CD4-positive, alpha-beta memory T cell (primary cell): ENCODE measurements at regions of chr5 and their contacts with region 1.

Region 1: DNA sequence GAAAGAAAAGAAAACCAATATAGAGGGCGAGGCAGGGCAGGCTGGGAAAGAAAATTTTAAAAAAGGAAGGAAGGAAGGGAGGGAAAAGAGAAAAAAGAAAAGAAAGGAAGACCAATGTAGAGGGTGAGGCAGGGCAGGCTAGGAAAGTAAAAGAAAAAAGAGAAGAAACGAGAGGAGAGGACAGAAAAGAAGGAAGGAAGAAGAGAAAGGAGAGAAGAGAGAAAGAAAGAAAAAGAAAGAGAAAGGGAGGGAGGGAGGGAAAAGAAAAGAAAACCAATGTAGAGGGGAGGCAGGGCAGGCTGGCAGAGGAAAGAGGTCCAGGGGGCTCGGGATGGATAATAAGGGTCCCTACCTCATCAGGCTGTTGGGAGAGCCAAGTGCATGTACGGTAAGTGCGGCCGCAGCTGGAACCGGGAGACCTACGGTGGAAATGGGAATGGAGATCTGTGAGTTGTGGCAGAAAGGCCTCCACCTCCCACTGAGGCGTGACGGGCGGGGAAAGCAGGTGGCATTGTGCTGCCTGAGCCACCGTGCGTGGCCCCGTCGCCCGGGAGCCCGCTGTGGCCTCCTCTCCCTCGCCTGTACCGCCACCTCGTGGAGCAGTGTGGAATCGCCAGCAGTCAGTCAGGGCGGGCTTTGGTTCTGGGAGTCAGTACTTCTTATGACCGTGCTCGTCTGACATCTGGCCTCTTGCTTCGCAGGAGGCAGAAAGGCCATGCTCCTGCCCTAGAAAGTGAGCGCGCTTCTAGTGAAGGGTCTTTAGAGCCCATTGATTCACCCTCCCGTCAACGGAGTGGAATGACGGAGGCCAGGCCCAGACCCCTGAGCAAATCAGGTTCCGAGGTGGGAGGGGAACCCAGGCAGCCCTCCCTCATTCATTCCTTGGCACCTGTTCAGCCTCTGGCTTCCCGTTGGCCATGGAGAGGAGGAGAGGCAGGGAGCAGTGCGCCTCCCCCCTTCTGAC is 10.4 kb upstream of the NHP2 start:
- DNase-seq: peak; percentile 86 to 91 (median 88)
- H3K4me3 ChIP-seq: no peak overlapping the region
- H3K4me3 Mint-ChIP-seq: peak overlapping the region in 2 of 8 donors; percentile 22 to 65
- H3K27ac ChIP-seq: no peak overlapping the region
- H3K27ac Mint-ChIP-seq: peak overlapping the region in 3 of 7 donors; percentile 13 to 59 (median 53)
- H3K4me1 ChIP-seq: peaks cover 3% of the 10 kb centered on the region
- H3K4me1 Mint-ChIP-seq: peaks cover 1 to 10% (median 6%) of the 10 kb centered on the region in 4 donors
- H3K27me3 ChIP-seq: no peaks in the 10 kb centered on the region
- H3K27me3 Mint-ChIP-seq: peaks cover 8 to 20% of the 10 kb centered on the region in 2 donors

Region 2: GRCh38 chr5:178146020-178146820 is 17.8 kb before region 1 on chr5:
- CTCF ChIA-PET with region 1: interaction called, 9 read pairs
- POLR2A ChIA-PET with region 1: no interaction called
- intact Hi-C with region 1: loop called (anchors 1 kb)
- DNase-seq: peak; percentile 71 to 77 (median 74)
- H3K4me3 ChIP-seq: no peak overlapping the region
- H3K4me3 Mint-ChIP-seq: no peak overlapping the region
- H3K27ac ChIP-seq: no peak overlapping the region
- H3K27ac Mint-ChIP-seq: peak overlapping the region in 3 of 7 donors; percentile 41 to 46 (median 45)
- H3K4me1 ChIP-seq: peaks cover 12% of the 10 kb centered on the region
- H3K4me1 Mint-ChIP-seq: peaks cover 8 to 22% (median 10%) of the 10 kb centered on the region in 4 donors
- H3K27me3 ChIP-seq: no peaks in the 10 kb centered on the region
- H3K27me3 Mint-ChIP-seq: no peaks in the 10 kb centered on the region

Region 3: GRCh38 chr5:178271726-178272479 is 107.8 kb after region 1 on chr5:
- CTCF ChIA-PET with region 1: no interaction called
- POLR2A ChIA-PET with region 1: no interaction called
- intact Hi-C with region 1: no loop called
- DNase-seq: no peak
- H3K4me3 ChIP-seq: no peak overlapping the region
- H3K4me3 Mint-ChIP-seq: peak overlapping the region in 1 of 8 donors; percentile 54
- H3K27ac ChIP-seq: no peak overlapping the region
- H3K27ac Mint-ChIP-seq: no peak overlapping the region
- H3K4me1 ChIP-seq: no peaks in the 10 kb centered on the region
- H3K4me1 Mint-ChIP-seq: no peaks in the 10 kb centered on the region
- H3K27me3 ChIP-seq: no peaks in the 10 kb centered on the region
- H3K27me3 Mint-ChIP-seq: peaks cover 2% of the 10 kb centered on the region in 2 donors